Activated naive CD4-positive, alpha-beta T cell treated with anti-CD3 and anti-CD28 coated beads for 36 hours (primary cell): ENCODE measurements at regions of chr6 and their contacts with region 1.

Region 1: DNA sequence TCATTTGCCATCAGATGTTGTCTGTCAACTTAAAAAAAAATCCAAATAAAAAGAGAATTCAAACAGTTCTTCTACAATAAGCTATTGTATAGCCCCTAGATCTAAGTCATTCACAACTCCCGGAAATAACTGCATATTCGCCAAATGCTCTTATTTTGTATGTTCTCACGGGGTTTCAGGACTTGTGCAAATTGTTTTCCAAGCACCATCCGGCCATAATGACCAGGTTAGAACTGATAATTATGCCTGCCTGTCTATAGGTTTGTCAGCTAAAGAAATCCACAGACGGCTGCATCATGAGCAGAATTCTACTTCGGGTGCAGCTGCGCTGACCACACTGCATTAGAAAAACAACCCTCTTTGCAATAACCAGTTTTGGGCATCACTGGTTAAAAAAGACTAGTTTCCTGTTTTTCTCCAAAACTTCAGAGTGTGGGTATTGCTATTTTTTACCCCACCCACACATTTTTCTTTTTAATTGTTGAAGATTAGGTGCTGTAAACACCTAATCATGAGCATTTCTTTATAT is 87.7 kb downstream of the HIVEP2 start:
- DNase-seq: no peak
- H3K4me3 Mint-ChIP-seq: peak overlapping the region; percentile 68
- H3K27ac Mint-ChIP-seq: peak overlapping the region; percentile 69
- H3K4me1 Mint-ChIP-seq: peaks cover 95% of the 10 kb centered on the region
- H3K27me3 Mint-ChIP-seq: no peaks in the 10 kb centered on the region

Region 2: GRCh38 chr6:142871910-142872331 is 14.6 kb after region 1 on chr6:
- CTCF ChIA-PET with region 1: no interaction called
- intact Hi-C with region 1: loop called (anchors 1 kb)
- DNase-seq: peak; percentile 83
- H3K4me3 Mint-ChIP-seq: peak overlapping the region; percentile 33
- H3K27ac Mint-ChIP-seq: peak overlapping the region; percentile 84
- H3K4me1 Mint-ChIP-seq: peaks cover 83% of the 10 kb centered on the region
- H3K27me3 Mint-ChIP-seq: no peaks in the 10 kb centered on the region

Region 3: GRCh38 chr6:142913511-142914047 is 56.3 kb after region 1 on chr6:
- CTCF ChIA-PET with region 1: no interaction called
- intact Hi-C with region 1: loop called (anchors 1 kb)
- DNase-seq: peak; percentile 82
- H3K4me3 Mint-ChIP-seq: peak overlapping the region; percentile 64
- H3K27ac Mint-ChIP-seq: peak overlapping the region; percentile 96
- H3K4me1 Mint-ChIP-seq: peaks cover 84% of the 10 kb centered on the region
- H3K27me3 Mint-ChIP-seq: no peaks in the 10 kb centered on the region

Region 4: GRCh38 chr6:143026696-143027449 is 169.6 kb after region 1 on chr6:
- CTCF ChIA-PET with region 1: interaction called, 6 read pairs
- intact Hi-C with region 1: loop called (anchors 2 kb)
- DNase-seq: peak; percentile 76
- H3K4me3 Mint-ChIP-seq: no peak overlapping the region
- H3K27ac Mint-ChIP-seq: no peak overlapping the region
- H3K4me1 Mint-ChIP-seq: peaks cover 7% of the 10 kb centered on the region
- H3K27me3 Mint-ChIP-seq: no peaks in the 10 kb centered on the region

Region 5: DNA sequence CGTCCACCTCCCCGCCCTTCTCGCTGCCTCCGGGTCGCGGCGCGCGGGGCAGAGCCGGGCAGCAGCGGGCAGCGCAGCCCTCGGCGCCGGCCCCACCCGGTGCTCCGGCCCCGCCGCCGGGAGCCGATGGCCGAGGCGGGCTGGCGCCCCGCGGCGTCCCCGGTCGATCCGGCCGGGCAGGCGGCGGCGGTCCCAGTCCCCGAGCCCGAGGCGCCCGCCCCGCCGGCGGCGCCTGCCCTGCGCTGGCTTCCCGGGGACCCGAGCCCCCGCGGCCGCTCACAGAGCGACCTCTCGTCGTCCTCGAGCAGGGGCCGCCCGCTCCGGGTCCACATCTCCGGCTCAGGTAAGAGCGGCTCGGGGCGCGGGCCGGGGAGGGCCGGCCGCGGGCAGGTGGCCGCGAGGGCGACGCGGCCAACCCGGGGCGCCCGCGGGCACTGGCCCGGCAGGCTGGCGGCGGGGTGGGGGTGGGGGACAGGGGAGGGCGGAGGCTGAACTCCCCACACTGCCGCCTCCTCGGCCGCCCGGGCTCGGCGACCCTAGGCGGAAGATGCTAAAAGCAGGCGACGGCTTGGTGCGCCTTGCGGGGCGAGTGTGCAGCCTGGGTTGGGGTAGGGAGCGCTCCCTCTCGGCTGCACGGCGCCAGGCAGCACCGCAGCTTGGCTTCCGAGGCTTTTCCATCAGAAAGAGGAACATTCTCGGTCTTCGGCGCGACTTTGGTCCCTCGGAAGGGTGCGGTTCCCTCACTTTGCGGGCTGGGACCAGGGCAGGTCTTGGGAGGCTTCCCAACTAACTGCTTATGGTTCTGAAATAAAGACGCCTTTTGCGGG is 679.8 kb after region 1 on chr6:
- CTCF ChIA-PET with region 1: no interaction called
- intact Hi-C with region 1: no loop called
- DNase-seq: peak; percentile 71
- H3K4me3 Mint-ChIP-seq: peak overlapping the region; percentile 76
- H3K27ac Mint-ChIP-seq: peak overlapping the region; percentile 15
- H3K4me1 Mint-ChIP-seq: peaks cover 35% of the 10 kb centered on the region
- H3K27me3 Mint-ChIP-seq: no peaks in the 10 kb centered on the region